Pancreas (tissue), 10 donors: ENCODE measurements at regions of chr1 and their contacts with region 1.

Region 1: GRCh38 chr1:161738627-161739287 is 10.8 kb upstream of the DUSP12 start:
- DNase-seq: peak in 1 of 6 donors; percentile 37
- ATAC-seq: peak in 3 of 4 donors; percentile 39 to 69 (median 69)
- H3K4me3 ChIP-seq: no peak overlapping the region
- H3K27ac ChIP-seq: peak overlapping the region in 1 of 4 donors; percentile 0
- H3K4me1 ChIP-seq: no peaks in the 10 kb centered on the region
- H3K27me3 ChIP-seq: no peaks in the 10 kb centered on the region
- CTCF ChIP-seq: peak in 1 of 4 donors; percentile 11

Region 2: GRCh38 chr1:161192476-161193465 is 546.0 kb before region 1 on chr1:
- intact Hi-C with region 1: no loop called
- DNase-seq: peak in 3 of 6 donors; percentile 41 to 66 (median 57)
- ATAC-seq: peak; percentile 73 to 89 (median 82)
- H3K4me3 ChIP-seq: no peak overlapping the region
- H3K27ac ChIP-seq: no peak overlapping the region
- H3K4me1 ChIP-seq: no peaks in the 10 kb centered on the region
- H3K27me3 ChIP-seq: no peaks in the 10 kb centered on the region
- CTCF ChIP-seq: peak; percentile 61 to 88 (median 76)

Region 3: GRCh38 chr1:161486806-161487741 is 251.7 kb before region 1 on chr1:
- intact Hi-C with region 1: loop called in 1 of 3 experiments (anchors 10 kb)
- DNase-seq: peak in 2 of 6 donors; percentile 22 to 30
- ATAC-seq: peak in 3 of 4 donors; percentile 76 to 89 (median 89)
- H3K4me3 ChIP-seq: no peak overlapping the region
- H3K27ac ChIP-seq: no peak overlapping the region
- H3K4me1 ChIP-seq: no peaks in the 10 kb centered on the region
- H3K27me3 ChIP-seq: peaks cover 0 to 7% (median 0%) of the 10 kb centered on the region in 4 donors
- CTCF ChIP-seq: peak; percentile 51 to 79 (median 69)